GM13977 (cell line): ENCODE measurements at regions of chr2 and their contacts with region 1.

Region 1: DNA sequence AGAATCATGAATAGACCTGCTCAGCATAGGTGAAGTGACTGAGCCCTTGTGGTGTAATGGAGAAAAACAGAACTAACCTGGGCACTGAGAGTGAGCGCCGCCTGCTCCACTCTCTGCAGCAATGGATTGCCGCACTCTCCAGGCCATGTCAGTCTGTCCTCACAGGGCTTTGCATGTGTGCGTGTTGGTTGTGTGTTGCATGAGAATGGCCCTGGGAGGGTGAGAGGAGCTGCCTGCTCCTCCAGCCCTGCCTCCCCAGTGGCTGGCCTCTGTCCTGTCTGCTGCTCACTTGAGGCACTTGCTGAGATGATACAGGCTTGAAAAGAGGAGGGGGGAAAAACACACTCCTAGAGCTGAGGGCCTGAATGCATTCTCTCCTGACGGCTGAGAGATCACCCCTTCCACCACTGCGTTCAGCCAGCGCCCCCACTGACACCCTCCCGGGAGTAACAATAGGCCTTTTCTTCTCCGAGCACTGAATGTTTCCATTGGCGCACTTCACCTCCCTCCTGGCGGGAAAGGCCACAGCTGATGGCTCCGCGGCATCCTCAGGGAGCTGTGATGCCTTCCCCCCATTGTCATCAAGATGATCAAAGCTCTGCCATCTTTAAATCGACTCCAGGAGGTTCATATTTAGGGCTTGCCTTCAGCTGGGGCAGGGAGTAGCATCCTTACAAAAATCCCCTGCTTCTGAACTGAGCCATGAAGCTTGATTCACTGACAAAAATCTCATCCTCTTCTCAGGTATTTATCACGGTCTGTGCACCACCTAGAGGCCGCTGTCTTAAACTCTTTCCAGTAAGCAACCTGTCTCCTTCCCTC is 49.9 kb upstream of the DAPL1 start:
- DNase-seq: peak; percentile 50
- CTCF ChIP-seq: peak; percentile 62

Region 2: DNA sequence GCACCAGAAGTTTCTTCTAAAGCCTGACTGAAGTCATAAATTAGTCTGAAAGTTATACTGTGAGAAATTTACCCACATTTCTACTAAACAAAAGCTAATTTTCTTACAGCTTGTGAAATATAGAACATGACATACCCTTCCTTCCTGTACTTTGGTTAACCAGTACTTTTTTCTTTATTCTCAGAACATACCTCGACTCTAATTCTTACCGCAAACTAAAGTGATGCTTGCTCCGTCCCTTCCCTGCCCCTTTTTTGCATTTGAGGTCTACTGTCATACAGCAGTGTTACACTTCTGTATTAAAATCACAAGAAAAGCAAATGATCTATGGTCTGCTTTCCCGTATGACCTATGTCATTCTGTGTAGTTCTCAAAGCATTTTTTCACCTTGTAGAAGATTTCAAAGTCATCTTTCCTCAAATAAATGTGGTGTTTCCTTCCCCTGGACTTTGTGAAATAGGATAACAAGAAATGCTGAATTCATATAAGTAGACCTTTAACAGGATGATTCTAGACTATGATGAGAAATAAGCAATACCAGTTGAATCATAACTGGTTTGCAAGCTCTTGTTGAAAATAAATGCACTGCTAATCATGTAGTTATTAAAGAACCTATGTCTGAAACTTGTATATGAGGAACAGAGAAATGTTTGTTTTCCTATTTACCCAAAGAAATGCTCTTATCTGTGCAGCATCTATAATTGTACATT is 1331.8 kb before region 1 on chr2:
- in situ Hi-C with region 1: no loop called
- DNase-seq: peak; percentile 47
- CTCF ChIP-seq: no peak

Region 3: DNA sequence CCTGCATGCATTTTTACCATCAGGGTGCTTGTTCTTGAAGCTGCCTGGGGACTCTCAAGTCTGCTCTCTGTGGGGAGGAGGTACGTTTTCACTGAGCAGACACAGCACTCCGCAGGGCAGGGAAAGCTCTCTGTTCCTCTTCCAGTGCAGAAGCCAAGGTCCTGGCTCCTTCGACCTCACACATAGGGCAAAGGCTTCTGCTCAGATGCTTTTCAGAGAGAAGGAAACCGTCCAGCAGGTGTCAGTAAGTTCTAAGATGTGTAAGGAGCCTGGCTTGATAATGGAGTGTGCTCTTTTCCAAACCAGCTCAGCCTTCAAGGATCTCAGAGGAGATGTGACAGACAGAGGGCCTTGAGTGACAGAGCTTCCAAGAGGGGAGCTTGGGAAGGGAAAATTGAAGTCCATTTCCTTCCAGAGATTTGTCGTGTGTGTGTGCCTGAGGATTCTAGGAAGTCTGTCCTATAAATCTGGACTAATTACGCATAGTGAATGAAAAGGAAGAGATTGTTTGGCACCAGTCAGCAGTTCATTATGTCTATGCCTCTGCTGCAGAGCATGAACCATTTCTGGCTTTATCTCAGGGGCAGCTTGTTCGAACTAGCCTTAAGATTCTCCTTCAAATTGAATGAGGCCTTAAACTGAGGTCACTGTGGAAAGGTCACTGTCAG is 710.9 kb before region 1 on chr2:
- in situ Hi-C with region 1: loop called (anchors 25 kb)
- DNase-seq: peak; percentile 29
- CTCF ChIP-seq: peak; percentile 56

Region 4: DNA sequence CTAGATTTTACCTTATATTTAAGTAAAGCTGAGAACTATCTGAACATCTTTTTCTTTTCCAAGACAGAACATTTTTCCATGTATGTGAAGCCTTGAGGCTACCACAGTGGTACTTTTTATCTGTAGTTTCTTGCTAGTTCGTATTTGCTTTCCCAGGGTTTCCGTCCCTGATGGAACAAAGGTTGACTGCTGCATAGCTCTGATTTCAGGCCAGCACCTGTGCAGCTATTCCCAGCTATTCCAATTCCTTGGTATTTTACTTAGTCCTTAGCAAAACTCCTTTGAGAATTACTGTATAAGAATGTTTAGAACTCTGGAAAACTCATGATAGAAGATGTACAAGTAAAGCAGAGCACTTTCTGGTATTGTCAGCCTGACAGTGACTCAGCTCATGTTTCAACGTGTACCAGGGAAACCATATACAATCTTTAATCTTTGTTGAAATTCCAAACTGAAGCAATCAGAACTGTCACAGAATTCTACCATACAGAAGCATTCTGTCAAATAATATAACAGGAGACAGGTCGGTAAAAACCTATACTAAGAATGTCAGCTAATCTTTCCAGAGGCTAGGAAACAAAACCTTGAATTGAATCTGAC is 126.3 kb before region 1 on chr2:
- in situ Hi-C with region 1: no loop called
- DNase-seq: no peak
- CTCF ChIP-seq: no peak